ENCODE measurements at regions of chr16 and their contacts with region 1.

Region 1: DNA sequence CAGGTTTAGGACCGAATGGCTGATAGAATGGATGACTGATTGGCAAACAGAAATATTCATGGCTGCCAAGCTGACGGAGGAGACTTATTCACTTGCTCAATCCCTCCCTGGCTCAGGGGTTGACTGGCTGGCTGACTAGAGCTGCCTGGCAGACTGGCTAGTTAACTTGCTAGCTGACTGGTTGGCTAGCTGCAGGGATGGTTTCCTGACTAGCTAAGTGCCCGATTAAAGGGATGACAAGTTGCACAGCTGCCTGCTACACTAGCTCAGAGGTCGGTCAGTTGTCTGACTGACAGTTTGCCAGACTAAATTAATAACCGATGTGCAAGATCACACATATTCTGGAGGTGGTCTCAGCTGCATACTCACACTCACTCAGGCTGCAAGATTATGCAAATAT is 1208.4 kb upstream of the CDH8 start:
- DNase-seq: no peak
- ATAC-seq: peak in 1 of 4 donors; percentile 39
- H3K4me3 ChIP-seq: no peak overlapping the region
- H3K27ac ChIP-seq: no peak overlapping the region
- H3K4me1 ChIP-seq: no peaks in the 10 kb centered on the region
- H3K27me3 ChIP-seq: no peaks in the 10 kb centered on the region
- CTCF ChIP-seq: no peak
- POLR2A ChIP-seq: no peak

Region 2: GRCh38 chr16:63188086-63188771 is 56.4 kb before region 1 on chr16:
- intact Hi-C with region 1: loop called in 1 of 10 experiments (anchors 10 kb)
- DNase-seq: no peak
- ATAC-seq: no peak
- H3K4me3 ChIP-seq: no peak overlapping the region
- H3K27ac ChIP-seq: no peak overlapping the region
- H3K4me1 ChIP-seq: no peaks in the 10 kb centered on the region
- H3K27me3 ChIP-seq: no peaks in the 10 kb centered on the region
- CTCF ChIP-seq: no peak
- POLR2A ChIP-seq: no peak

Measured in heart left ventricle (tissue), 16 donors.